Heart right ventricle (tissue), 16 donors: ENCODE measurements at regions of chr1 and their contacts with region 1.

Region 1: GRCh38 chr1:30892671-30893073 is 15.9 kb downstream of the SDC3 start:
- DNase-seq: no peak
- ATAC-seq: peak in 1 of 8 donors; percentile 2
- H3K4me3 ChIP-seq: no peak overlapping the region
- H3K27ac ChIP-seq: no peak overlapping the region
- H3K4me1 ChIP-seq: peaks cover 9 to 65% (median 43%) of the 10 kb centered on the region in 9 donors
- H3K27me3 ChIP-seq: no peaks in the 10 kb centered on the region
- CTCF ChIP-seq: no peak

Region 2: DNA sequence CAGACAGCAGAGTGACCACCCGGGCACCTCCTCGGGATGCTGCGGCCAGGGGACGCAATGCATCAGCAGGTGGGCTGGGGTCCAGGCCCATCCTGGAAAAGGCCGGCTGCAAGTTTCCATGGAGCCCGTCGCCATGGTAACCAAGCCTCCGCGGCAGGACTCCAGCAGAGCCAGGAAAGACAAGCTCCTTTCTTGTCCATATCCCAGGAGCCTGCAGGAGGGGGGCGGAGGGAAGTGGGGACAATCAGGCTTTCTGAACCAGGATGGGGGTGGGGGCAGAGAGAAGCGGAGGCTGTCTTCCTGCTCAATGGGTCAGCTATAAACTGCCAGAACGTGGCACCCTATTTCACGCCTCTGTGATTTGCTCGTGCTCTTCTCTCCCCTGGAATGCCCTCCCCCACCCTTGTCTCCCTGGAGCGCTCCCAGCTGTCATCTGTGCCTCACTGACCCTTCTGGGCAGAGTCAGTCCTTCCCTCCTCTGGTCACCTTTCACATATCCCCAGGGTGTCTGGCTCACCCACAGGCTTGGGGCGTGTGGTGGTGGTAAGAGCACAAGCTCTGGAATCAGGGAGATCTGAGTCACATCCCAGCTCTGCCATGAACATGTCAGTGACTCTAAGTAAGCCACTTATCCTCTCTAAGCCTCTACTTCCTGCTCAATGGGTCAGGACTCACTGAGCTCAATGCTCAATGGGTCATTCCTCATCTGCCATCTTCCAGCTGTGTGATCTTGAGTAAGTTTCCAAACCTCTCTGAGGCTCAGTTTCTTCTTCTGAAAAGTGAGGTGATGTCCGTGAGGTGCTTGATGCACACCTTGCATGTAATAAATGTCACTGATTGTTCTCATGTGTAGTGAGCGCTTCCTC is 76.2 kb before region 1 on chr1:
- intact Hi-C with region 1: loop called in 1 of 10 experiments (anchors 5 kb)
- DNase-seq: peak; percentile 55 to 81
- ATAC-seq: peak; percentile 58 to 92 (median 80)
- H3K4me3 ChIP-seq: no peak overlapping the region
- H3K27ac ChIP-seq: peak overlapping the region in 3 of 10 donors; percentile 37 to 40 (median 38)
- H3K4me1 ChIP-seq: peaks cover 0 to 31% (median 17%) of the 10 kb centered on the region in 9 donors
- H3K27me3 ChIP-seq: peaks cover 0 to 75% (median 0%) of the 10 kb centered on the region in 7 donors
- CTCF ChIP-seq: no peak